Activated T-helper 2 cell treated with anti-CD3 and anti-CD28 coated beads, Interferon-gamma antibody, Interleukin-2, Interleukin-4, amounts not matched to agents 10 μg/mL and 5 μg/mL and 100 μg/mL, durations not matched to agents 14 hours and 24 hours and 36 hours (primary cell): ENCODE measurements at regions of chr4 and their contacts with region 1.

Region 1: DNA sequence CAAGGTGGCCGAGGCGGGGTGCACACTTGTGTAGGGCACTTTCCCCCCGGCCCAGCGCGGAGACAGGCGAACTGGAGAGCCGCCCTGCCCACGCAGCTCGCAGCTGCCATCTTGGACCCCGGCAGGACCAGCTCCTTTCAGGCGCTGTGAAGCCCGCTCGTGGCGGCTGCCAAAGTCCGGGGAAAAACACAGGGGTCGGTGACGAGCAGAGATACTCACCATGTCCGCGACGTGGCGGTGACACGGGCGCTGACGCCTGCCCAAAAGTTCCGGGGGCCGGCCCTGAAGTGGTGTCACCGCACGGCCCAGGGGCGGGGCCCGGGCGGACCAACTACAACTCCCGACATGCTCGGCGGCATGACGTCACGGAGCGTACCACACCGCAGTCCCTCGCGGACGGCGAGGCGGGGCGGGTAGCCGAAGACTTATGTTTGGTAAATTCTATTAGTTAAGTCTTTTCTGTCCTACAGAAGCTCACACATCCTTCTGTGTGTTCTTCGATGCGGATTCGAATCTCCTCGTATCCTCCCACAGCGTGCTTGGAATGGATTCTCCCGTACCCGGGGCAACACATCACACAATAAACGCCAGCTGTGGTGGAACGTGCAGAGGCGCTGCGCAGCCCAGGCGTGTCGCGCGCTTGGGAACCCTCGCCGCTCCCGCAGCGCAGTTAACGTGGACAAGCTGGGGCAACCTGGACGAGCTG is at the start of gene UFSP2:
- DNase-seq: peak; percentile 86
- H3K4me3 Mint-ChIP-seq: peak within 1 kb of the TSS; percentile 90
- H3K27ac Mint-ChIP-seq: peak within 1 kb of the TSS; percentile 86
- H3K4me1 Mint-ChIP-seq: peaks cover 24% of the 10 kb centered on the region
- H3K27me3 Mint-ChIP-seq: peaks cover 3% of the 10 kb centered on the region
- total RNA-seq, gene UFSP2: 26.4 and 34.5 TPM in 2 replicates

Region 2: GRCh38 chr4:185203486-185204237 is 222.1 kb before region 1 on chr4 and contains the start of gene CFAP97:
- intact Hi-C with region 1: loop called (anchors 2 kb)
- DNase-seq: peak; percentile 71
- H3K4me3 Mint-ChIP-seq: peak within 1 kb of the TSS; percentile 98
- H3K27ac Mint-ChIP-seq: peak within 1 kb of the TSS; percentile 99
- H3K4me1 Mint-ChIP-seq: peaks cover 30% of the 10 kb centered on the region
- H3K27me3 Mint-ChIP-seq: peaks cover 5% of the 10 kb centered on the region
- total RNA-seq, gene CFAP97: 44.1 and 46.9 TPM in 2 replicates